ENCODE measurements at regions of chr21 and their contacts with region 1.

Region 1: DNA sequence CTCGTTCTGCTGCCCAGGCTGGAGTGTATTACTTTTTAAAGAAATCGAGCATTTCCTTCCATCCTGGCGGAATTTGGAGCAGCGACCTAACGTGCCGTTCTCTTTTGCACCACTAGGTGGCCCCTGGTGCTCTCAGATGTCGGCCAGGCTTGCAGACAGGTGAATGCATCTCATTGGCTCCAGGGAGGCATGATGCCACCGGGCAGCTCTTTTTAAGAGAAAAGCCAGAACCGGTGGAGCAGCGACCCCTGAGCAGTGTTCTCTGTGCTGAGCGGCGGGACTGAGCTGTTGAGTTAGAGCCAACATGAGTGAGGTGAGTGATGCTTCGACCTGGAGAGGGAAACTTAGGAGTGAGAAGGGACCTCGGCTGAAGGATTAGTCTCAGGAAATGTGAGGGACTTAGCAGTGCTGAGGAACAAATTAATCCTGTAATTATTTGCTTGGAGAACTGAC is at the start of gene PCP4:
- DNase-seq: peak; percentile 71 to 75
- H3K4me3 ChIP-seq: no peak within 1 kb of the TSS
- H3K4me3 Mint-ChIP-seq: peak within 1 kb of the TSS; percentile 61
- H3K27ac Mint-ChIP-seq: peak within 1 kb of the TSS; percentile 28
- H3K4me1 ChIP-seq: no peaks in the 10 kb centered on the region
- H3K4me1 Mint-ChIP-seq: peaks cover 7% of the 10 kb centered on the region
- H3K27me3 ChIP-seq: no peaks in the 10 kb centered on the region
- H3K27me3 Mint-ChIP-seq: peaks cover 8% of the 10 kb centered on the region
- CTCF ChIP-seq: peak; percentile 88 to 94
- total RNA-seq, gene PCP4: 4.0 and 4.7 TPM in 2 replicates

Region 2: DNA sequence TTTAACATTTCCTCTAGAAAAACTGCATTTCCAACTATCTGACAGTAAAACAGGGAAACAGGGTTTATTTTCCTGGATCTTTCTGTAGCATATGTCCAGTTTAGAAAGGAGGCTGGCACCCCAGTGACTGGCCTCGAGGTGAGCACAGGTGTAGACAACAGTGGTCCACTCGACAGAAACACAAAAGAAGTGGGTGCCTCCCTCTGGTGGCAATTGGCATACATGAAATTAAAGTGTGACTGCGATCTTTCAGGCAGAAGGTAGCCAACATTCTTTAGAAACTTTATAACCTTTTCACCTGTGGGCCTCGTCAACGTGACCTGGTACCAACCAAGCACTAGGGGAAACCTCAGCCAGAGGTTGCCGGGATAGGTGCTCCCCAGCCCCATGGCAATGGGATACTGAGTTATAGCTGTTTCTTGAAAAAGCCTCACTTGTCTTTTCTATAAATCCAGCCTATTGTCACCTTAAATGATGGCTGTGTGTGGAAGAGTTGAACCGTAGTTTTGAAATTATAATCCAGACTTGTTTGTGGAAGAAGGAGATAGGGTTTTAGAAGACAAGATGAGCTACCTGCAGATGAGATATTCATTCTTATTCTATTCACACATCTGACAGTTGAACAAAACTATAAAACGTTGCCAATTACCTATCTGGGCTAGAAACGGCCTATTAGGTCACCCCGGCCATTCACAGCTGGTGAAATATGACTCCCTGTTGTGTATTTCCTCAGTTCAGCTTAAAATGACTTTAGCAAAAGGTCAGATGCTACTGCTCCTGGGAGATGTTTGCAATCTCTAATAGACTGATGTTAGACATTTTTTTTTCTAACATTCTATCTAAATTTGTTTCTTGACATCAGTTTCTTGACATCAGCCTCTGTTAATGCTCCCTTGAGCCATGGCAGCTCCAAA is 44.3 kb after region 1 on chr21:
- CTCF ChIA-PET with region 1: no interaction called
- POLR2A ChIA-PET with region 1: no interaction called
- intact Hi-C with region 1: loop called (anchors 1 kb)
- DNase-seq: peak in 1 of 2 experiments; percentile 19
- H3K4me3 ChIP-seq: no peak overlapping the region
- H3K4me3 Mint-ChIP-seq: no peak overlapping the region
- H3K27ac Mint-ChIP-seq: no peak overlapping the region
- H3K4me1 ChIP-seq: no peaks in the 10 kb centered on the region
- H3K4me1 Mint-ChIP-seq: no peaks in the 10 kb centered on the region
- H3K27me3 ChIP-seq: no peaks in the 10 kb centered on the region
- H3K27me3 Mint-ChIP-seq: no peaks in the 10 kb centered on the region
- CTCF ChIP-seq: peak in 1 of 2 experiments; percentile 17

Region 3: GRCh38 chr21:40120940-40121575 is 253.8 kb after region 1 on chr21:
- CTCF ChIA-PET with region 1: interaction called, 19 read pairs
- POLR2A ChIA-PET with region 1: no interaction called
- intact Hi-C with region 1: loop called (anchors 1 kb)
- DNase-seq: peak in 1 of 2 experiments; percentile 14
- H3K4me3 ChIP-seq: no peak overlapping the region
- H3K4me3 Mint-ChIP-seq: no peak overlapping the region
- H3K27ac Mint-ChIP-seq: no peak overlapping the region
- H3K4me1 ChIP-seq: no peaks in the 10 kb centered on the region
- H3K4me1 Mint-ChIP-seq: no peaks in the 10 kb centered on the region
- H3K27me3 ChIP-seq: no peaks in the 10 kb centered on the region
- H3K27me3 Mint-ChIP-seq: peaks cover 14% of the 10 kb centered on the region
- CTCF ChIP-seq: peak; percentile 86 to 91